ENCODE measurements at regions of chr1 and their contacts with region 1.

Region 1: DNA sequence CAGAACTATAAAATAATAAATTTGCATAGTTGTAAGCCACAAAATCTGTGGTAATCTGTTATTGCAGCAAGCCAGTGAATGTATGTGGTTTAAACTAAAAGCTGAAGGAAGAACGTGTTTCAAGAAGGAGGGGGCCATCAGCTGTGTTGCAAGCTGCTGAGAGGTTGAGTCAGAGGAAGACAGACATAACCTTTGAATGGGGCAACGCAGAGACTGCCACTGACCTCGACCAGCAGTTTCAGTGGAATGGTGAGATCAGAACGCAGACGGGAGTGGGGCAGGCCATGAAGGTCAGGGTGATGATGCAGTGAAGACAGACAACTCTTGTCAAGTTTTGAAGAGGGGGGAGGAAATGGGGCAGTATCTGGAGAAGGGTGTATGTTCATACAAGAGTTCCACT is 23.2 kb upstream of the QSOX1 start:
- DNase-seq: no peak
- ATAC-seq: no peak
- H3K4me3 ChIP-seq: no peak overlapping the region
- H3K27ac ChIP-seq: no peak overlapping the region
- H3K4me1 ChIP-seq: peaks cover 20% of the 10 kb centered on the region
- H3K27me3 ChIP-seq: no peaks in the 10 kb centered on the region
- CTCF ChIP-seq: no peak

Region 2: DNA sequence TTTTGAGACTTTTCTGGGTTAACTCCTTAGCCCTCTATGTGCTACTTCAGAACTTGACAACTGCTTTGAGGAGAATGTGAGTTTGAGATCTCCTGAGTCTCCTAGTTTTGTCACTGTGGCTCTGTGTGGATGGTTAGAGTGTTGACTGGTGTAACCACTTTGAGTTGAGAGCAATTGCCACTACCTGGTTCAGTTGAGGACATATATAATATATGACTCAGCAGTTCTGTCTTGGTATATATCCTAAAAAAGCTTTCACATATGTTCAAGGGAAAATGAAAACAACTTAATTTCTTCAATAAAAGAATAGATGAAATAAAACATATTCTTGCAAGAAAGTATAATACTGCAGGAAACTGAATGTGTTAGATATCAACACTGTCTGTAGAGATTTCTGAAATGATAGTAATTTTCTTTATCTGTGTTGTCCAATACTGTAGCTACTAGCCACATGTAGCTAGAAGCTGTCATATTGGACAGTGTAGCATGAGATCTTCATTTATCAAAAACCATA is 73.6 kb before region 1 on chr1:
- CTCF ChIA-PET with region 1: no interaction called
- POLR2A ChIA-PET with region 1: interaction called, 42 read pairs
- intact Hi-C with region 1: no loop called
- DNase-seq: no peak
- ATAC-seq: no peak
- H3K4me3 ChIP-seq: no peak overlapping the region
- H3K27ac ChIP-seq: no peak overlapping the region
- H3K4me1 ChIP-seq: no peaks in the 10 kb centered on the region
- H3K27me3 ChIP-seq: no peaks in the 10 kb centered on the region
- CTCF ChIP-seq: no peak

Region 3: DNA sequence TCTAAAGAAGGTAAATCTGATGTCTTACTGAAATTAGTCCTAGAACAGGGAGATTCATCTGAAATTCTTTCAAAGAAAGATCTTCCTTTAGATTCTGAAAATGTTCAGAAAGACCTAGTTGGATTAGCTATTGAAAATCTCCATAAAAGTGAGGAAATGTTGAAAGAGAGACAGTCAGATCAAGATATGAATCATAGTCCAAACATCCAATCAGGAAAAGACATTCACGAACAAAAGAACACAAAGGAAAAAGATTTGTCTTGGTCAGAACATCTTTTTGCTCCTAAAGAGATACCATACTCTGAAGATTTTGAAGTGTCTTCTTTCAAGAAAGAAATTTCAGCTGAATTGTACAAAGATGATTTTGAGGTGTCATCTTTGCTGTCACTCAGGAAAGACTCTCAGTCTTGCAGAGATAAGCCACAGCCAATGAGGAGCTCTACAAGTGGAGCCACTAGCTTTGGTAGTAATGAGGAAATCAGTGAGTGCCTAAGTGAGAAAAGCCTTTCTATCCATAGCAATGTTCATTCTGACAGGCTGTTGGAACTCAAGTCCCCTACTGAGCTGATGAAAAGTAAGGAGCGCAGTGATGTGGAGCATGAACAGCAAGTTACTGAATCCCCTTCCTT is 38.5 kb before region 1 on chr1:
- CTCF ChIA-PET with region 1: no interaction called
- POLR2A ChIA-PET with region 1: no interaction called
- intact Hi-C with region 1: loop called (anchors 1 kb)
- DNase-seq: no peak
- ATAC-seq: no peak
- H3K4me3 ChIP-seq: no peak overlapping the region
- H3K27ac ChIP-seq: no peak overlapping the region
- H3K4me1 ChIP-seq: no peaks in the 10 kb centered on the region
- H3K27me3 ChIP-seq: no peaks in the 10 kb centered on the region
- CTCF ChIP-seq: no peak

Region 4: GRCh38 chr1:180167721-180168467 is 36.4 kb after region 1 on chr1:
- CTCF ChIA-PET with region 1: no interaction called
- POLR2A ChIA-PET with region 1: interaction called, 3 read pairs
- intact Hi-C with region 1: loop called (anchors 1 kb)
- DNase-seq: peak; percentile 93
- ATAC-seq: peak; percentile 91
- H3K4me3 ChIP-seq: no peak overlapping the region
- H3K27ac ChIP-seq: peak overlapping the region; percentile 73
- H3K4me1 ChIP-seq: peaks cover 51% of the 10 kb centered on the region
- H3K27me3 ChIP-seq: no peaks in the 10 kb centered on the region
- CTCF ChIP-seq: peak; percentile 43